Left lung (tissue), 14 donors: ENCODE measurements at regions of chr6 and their contacts with region 1.

Region 1: DNA sequence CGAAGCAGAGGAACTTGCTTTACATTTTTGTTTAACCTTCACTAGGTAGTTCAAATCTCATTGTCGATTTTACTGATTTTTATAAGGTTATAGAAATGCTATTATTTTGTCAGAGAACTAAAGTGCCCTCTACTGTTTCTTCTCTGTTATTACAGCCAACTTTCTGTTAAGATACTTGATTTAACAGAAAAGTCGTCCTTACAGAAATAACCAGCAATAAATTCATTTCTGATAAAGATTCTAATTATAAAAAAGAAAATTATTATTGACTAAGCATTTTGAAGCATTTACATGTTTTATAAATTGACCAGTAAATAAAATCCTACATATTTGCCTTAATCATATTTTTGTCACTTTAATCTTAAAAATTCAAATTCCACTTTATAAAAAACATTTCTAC is 60.8 kb downstream of the OGFRL1 start:
- DNase-seq: peak in 1 of 4 donors; percentile 21
- ATAC-seq: peak; percentile 56
- H3K4me3 ChIP-seq: no peak overlapping the region
- H3K27ac ChIP-seq: peak overlapping the region in 1 of 2 donors; percentile 56
- H3K4me1 ChIP-seq: peaks cover 0 to 15% of the 10 kb centered on the region in 2 donors
- H3K27me3 ChIP-seq: no peaks in the 10 kb centered on the region
- CTCF ChIP-seq: peak; percentile 55 to 74

Region 2: DNA sequence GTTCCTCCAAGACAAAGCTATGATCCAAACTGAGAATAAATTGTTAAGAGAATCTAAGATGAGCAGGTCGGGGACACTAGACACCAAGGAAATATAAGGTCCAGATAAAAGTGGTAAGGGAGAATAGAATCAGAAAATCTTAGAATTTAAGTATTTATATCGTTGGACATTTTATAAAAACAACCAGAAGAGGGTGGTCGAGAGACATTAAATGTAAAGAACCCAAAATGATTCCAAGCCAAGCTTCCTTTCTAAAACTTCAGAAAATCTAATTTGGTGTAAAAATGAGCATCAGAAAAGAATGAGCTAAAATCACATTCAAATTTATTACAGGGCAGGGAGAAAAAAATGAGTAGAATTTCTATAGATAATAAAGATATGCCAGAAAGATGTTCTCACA is 158.6 kb before region 1 on chr6:
- intact Hi-C with region 1: loop called in 1 of 2 experiments (anchors 5 kb)
- DNase-seq: peak in 2 of 4 donors; percentile 10 to 26
- ATAC-seq: peak; percentile 25
- H3K4me3 ChIP-seq: no peak overlapping the region
- H3K27ac ChIP-seq: no peak overlapping the region
- H3K4me1 ChIP-seq: no peaks in the 10 kb centered on the region
- H3K27me3 ChIP-seq: no peaks in the 10 kb centered on the region
- CTCF ChIP-seq: no peak